Testis (tissue), 5 donors: ENCODE measurements at regions of chr1 and their contacts with region 1.

Region 1: DNA sequence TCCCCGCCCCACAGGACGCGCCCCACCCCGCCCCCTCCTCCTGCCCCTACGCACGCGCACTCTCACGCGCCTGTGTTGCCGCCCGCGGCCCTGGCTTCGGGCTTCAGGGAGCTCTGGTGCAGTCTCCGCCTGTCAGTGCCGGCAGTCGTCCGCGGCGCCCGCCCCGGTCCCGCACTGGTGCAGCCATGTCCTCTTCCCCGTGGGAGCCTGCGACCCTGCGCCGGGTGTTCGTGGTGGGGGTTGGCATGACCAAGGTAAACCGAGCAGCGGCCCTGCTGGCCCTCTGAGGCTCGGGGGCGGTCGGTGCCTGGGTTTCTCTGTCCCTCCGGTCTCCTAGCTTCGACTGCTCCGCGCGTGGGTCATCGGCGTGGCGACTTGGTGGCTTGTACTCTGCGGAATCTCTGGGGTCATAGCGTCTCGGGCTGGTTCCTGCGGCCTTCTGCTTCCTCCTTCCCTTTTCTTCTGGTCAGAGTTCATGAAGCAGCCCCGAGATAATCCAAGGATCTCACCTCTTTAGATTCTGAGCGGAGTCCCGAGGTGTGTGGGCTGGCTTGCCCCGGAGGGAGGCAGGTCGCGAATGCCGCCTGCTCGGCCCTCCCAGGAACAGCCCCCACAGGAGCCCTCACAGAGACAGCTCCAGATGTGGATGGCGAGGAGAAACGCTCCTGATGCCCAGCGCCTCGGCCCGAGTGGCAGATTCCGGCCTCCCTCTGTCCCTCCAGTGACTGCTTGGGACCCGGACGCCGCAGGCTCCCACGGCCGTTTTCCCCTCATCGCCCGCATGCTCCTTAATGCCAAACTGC is at the start of gene SCP2:
- DNase-seq: peak; percentile 88
- H3K4me3 ChIP-seq: peak within 1 kb of the TSS; percentile 68 to 78
- H3K27ac ChIP-seq: peak within 1 kb of the TSS; percentile 73 to 79
- H3K4me1 ChIP-seq: peaks cover 8% of the 10 kb centered on the region
- H3K27me3 ChIP-seq: no peaks in the 10 kb centered on the region
- CTCF ChIP-seq: no peak
- POLR2A ChIP-seq: no peak
- total RNA-seq, gene SCP2: 103 to 108 TPM

Region 2: GRCh38 chr1:53182111-53182593 is 254.7 kb after region 1 on chr1:
- intact Hi-C with region 1: loop called (anchors 10 kb)
- DNase-seq: peak; percentile 95
- H3K4me3 ChIP-seq: no peak overlapping the region
- H3K27ac ChIP-seq: peak overlapping the region; percentile 32 to 63
- H3K4me1 ChIP-seq: peaks cover 23% of the 10 kb centered on the region
- H3K27me3 ChIP-seq: no peaks in the 10 kb centered on the region
- CTCF ChIP-seq: peak; percentile 91 to 93 (median 93)
- POLR2A ChIP-seq: no peak